ENCODE measurements at regions of chr9 and their contacts with region 1.

Region 1: GRCh38 chr9:109320742-109321448 is at the start of gene EPB41L4B:
- DNase-seq: peak; percentile 78 to 95 (median 89)

Region 2: DNA sequence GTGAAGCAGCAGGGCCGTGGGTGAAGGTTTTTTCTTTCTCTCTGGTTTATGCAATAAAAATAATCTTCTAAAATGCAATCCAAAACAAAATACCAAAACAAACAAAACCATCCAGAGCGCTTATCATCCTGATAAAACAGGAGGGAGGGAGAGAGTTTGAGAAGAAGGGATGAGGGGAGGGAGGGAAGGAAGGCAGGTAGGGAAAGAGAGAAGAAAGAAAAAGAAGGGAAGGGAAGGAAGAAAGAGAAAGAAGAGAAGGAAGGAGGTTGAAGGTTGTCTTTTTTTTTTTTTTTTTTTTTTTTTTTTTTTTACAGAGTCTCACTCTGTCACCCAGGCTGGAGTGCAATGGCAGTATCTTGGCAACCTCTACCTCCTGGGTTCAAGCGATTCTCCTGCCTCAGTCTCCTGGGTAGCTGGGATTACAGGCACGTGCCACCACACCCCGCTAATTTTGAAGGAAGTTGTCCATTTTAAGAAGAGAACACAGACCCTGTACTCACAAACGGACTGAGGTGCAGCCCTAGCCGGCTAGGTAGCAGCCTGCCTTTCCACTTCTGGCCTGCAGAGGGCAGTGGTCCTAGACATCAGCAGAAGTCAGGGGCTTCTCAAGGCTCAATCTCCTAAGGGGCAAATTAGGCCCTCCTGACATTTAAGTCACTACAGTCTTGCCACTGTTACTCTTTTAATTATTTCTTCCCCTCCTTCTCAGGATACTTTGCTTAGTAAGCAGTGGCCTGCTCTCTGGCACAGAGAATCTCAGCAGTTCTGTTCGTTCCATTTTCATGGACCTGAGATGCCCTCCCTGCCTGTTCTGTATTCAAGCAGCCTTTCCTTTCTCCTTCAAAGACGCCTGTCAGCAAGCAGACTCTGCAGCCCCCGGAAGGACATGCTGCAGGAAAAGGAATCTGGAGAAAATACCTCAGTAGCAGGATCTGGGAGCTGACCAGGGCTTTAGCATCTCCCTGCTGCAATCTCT is 76.5 kb before region 1 on chr9:
- intact Hi-C with region 1: loop called (anchors 5 kb)
- DNase-seq: peak; percentile 19 to 93 (median 80)

Measured in head of caudate nucleus (tissue), 42 donors.